PC-9 (cell line): ENCODE measurements at regions of chr3 and their contacts with region 1.

Region 1: DNA sequence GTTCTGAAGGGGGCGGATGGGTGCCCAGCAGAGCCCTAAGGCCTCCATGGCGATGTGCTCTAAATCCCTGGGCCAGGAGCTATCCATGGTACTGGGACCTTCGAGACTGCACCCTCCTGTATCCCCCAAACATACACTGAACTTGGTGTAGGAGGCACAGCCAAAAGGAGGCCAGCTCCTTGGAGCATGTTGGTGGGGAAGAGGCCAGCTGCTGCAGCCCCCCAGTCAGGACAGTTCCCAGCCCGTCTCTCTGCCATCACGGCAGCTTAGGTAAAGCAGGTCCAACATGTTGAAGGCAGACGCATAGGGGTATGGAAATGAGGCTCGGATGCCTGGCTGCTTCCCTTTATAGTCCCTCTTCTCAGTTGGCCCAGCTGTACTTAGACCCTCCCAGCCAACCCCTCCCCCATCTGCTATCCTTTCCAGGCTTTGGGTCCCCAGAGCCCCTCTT is 1.8 kb downstream of the CAMKV start:
- DNase-seq: no peak
- H3K4me3 ChIP-seq: no peak overlapping the region
- H3K27ac ChIP-seq: no peak overlapping the region
- H3K4me1 ChIP-seq: no peaks in the 10 kb centered on the region
- H3K27me3 ChIP-seq: peaks cover 35% of the 10 kb centered on the region
- CTCF ChIP-seq: no peak

Region 2: DNA sequence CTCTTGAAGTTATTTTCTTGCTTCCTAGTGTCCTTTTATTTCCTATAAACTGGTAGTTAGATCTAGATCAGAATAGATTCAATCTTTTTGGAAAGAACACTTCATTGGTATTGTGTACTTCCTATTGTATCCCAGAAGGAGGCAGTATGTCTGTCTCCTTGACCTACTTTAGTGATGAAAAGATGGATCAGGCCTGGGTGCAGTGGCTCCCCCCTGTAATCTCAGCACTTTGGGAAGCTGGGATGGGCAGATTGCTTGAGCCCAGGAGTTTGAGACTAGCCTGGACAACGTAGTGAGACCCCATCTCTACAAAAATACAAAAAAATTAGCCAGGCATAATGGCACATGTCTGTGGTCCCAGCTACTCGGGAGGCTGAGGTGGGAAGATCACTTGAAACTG is 301.6 kb before region 1 on chr3:
- CTCF ChIA-PET with region 1: interaction called, 12 read pairs
- POLR2A ChIA-PET with region 1: no interaction called
- intact Hi-C with region 1: no loop called
- DNase-seq: no peak
- H3K4me3 ChIP-seq: no peak overlapping the region
- H3K27ac ChIP-seq: no peak overlapping the region
- H3K4me1 ChIP-seq: no peaks in the 10 kb centered on the region
- H3K27me3 ChIP-seq: peaks cover 8% of the 10 kb centered on the region; the same call in 1 of the 2 replicates
- CTCF ChIP-seq: peak; percentile 59

Region 3: GRCh38 chr3:49839193-49839809 is 28.6 kb before region 1 on chr3:
- CTCF ChIA-PET with region 1: no interaction called
- POLR2A ChIA-PET with region 1: no interaction called
- intact Hi-C with region 1: no loop called
- DNase-seq: peak in 1 of 2 experiments; percentile 59
- H3K4me3 ChIP-seq: no peak overlapping the region
- H3K27ac ChIP-seq: no peak overlapping the region
- H3K4me1 ChIP-seq: no peaks in the 10 kb centered on the region
- H3K27me3 ChIP-seq: no peaks in the 10 kb centered on the region
- CTCF ChIP-seq: peak; percentile 80